Posterior vena cava (tissue), 2 donors: ENCODE measurements at regions of chr7 and their contacts with region 1.

Region 1: DNA sequence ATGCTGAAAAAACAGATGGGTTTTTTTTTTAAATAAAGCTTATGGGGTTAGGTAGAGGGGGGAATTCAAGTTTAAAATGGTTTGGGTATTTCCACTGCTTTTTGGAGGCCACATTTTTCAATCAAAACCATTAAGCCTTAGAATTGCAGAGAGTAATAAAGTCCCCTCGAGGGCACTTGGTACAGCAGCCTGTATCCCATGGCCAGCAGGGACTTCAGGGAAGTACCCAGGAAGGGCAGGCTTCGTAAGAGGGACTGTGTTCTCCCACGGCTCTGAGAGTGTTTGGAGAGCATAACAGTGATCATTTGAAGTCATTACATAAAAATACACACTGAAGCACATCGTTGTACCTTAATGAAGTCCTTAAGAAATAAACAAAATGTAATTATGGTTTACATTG is 432.7 kb downstream of the DPP6 start:
- DNase-seq: no peak

Region 2: DNA sequence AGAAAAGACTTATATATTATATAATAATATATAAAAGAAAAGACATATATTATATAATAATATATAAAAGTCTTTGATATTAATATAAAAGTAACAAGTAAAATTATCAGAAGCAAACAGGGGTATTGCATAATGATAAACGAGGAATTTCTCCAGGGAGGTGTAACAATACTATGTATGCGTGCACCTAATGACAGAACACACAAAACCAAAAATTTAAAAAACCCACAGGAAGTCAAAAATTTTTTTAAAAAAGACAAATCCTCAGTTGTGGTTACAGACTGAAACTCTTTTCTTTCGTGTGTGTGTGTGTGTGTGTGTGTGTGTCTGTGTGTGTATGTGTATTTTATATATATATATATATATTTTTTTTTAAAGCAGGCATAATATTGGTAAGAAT is 712.0 kb before region 1 on chr7:
- intact Hi-C with region 1: no loop called
- DNase-seq: no peak

Region 3: DNA sequence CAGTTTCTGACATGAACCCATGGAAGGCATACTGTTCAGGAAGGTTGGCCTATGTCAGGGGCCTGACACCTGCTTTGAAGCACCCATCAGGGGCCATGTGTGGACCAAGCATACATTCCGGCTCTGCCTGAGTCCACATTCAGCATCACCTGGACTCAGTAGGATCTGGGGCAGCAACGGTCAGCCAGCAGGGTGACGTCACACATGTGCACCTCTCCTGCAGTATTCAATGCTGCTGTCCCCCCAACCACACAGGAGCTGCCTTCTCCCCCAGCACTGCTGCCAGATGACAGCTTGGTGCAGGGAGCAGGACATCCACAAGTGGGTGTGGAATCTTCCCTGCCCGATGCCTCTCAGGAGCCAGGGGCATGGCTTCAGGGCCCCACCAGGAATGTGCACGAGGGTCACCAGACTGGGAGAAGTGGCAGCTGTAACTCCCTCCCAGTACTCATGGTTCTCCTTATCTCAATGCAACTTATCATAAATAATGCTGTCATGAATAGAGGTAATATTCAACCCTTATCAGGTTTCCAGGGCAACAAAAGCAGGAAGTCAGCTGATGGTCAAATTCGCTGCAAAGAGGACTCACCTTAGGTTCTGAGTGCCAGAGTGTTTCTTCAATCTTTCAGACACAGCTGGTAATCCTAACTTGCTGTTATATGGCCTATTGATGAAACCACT is 225.0 kb after region 1 on chr7:
- intact Hi-C with region 1: loop called in 1 of 2 experiments (anchors 5 kb)
- DNase-seq: no peak